CD8-positive, alpha-beta T cell (primary cell): ENCODE measurements at regions of chr1 and their contacts with region 1.

Region 1: DNA sequence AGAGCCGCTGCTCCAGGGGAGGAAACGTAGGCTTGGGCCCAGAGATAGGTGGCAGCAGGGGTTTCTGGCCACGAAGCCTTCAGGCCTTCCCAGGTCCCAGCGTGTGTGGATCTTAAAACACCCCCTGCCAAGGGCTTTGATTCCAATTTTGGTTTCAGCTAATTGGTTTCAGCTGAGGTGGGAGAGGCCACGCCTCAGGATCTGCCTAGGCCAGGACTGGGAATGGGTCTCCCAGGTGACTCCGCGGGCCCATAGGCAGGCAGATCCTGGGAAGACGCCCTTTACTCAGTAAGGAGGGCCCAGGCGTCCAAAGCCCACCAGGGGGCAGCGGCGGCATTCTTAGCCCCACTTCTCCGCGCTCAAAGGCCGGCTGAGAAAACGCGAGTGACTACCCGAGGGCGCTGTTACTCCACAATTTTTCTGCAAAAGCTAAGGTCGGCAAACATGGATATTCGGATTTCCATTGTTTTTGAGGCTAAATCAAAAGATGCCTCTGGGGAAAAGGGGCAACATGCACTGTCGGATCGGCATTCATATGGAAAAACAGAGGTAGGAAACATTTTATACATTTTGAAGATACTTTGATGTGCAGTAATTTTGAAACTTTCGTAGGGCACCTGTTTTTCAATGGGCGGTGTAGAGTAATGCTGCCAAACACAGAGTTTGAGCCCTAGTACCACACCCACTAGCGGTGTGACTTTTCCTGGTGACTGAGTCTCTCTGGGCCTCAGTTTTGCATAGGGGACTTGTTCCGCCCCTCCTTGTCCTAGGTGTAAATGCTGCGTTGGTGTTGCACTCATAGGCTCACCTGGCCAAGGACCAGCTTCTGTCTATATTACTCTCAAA is 31.8 kb upstream of the BCL10 start:
- DNase-seq: peak; percentile 19 to 74 (median 65)
- ATAC-seq: peak; percentile 90
- H3K4me3 ChIP-seq: no peak overlapping the region
- H3K4me3 Mint-ChIP-seq: peak overlapping the region; percentile 65
- H3K27ac ChIP-seq: no peak overlapping the region
- H3K27ac Mint-ChIP-seq: no peak overlapping the region
- H3K4me1 ChIP-seq: peaks cover 4% of the 10 kb centered on the region
- H3K4me1 Mint-ChIP-seq: peaks cover 5% of the 10 kb centered on the region
- H3K27me3 ChIP-seq: no peaks in the 10 kb centered on the region
- H3K27me3 Mint-ChIP-seq: peaks cover 35% of the 10 kb centered on the region
- CTCF ChIP-seq: peak; percentile 68

Region 2: DNA sequence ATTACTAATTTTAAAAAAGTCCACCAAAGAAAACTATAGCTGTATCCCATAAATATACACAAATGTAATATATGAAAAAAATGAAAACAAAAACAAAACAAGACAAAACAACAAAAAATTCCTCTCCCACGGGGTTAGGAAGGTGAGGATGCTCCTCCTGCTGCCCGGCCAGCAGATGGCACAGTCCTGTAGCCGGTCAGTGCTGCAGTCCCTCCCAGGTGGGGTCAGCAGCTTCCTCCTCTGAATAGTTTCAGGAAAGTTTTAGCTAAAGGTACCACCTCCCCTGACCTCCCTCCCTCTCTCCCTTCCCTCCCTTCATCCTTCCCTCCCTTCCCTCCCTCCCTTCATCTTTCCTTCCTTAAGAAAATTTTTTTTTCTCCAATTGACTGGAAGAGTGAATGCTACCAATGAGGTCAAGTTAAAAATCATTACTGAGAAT is 36.1 kb after region 1 on chr1:
- CTCF ChIA-PET with region 1: no interaction called
- POLR2A ChIA-PET with region 1: no interaction called
- intact Hi-C with region 1: no loop called
- DNase-seq: no peak
- ATAC-seq: no peak
- H3K4me3 ChIP-seq: no peak overlapping the region
- H3K4me3 Mint-ChIP-seq: no peak overlapping the region
- H3K27ac ChIP-seq: no peak overlapping the region
- H3K27ac Mint-ChIP-seq: no peak overlapping the region
- H3K4me1 ChIP-seq: no peaks in the 10 kb centered on the region
- H3K4me1 Mint-ChIP-seq: no peaks in the 10 kb centered on the region
- H3K27me3 ChIP-seq: no peaks in the 10 kb centered on the region
- H3K27me3 Mint-ChIP-seq: peaks cover 10% of the 10 kb centered on the region
- CTCF ChIP-seq: no peak

Region 3: DNA sequence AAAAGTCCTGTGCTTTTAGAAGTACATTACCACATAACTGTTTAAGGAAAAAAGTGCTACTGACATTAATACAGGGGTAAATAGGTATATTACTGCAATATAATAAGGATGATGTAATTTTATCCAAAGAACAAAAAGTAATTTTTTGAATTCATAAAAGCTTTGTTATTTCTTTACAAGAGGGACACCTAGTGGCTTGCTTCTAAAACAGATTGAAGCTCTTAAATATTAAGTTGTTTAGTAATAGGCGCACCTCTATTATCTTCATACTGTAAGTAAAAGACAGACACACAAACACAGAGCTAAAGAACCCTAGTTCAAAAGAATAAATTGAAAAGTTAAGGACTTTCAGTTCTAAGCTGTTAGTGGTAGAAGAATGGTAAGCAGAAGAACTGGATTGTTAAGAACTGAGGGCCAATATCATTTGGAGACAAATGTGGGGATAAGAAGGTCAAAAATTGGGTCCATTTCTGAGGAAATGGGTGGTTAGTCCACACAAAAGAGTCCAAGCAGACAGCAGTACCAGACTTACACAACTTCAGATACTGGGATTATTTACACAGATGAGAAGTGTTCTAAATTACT is 384.6 kb after region 1 on chr1:
- CTCF ChIA-PET with region 1: interaction called, 3 read pairs
- POLR2A ChIA-PET with region 1: no interaction called
- intact Hi-C with region 1: loop called (anchors 5 kb)
- DNase-seq: no peak
- ATAC-seq: no peak
- H3K4me3 ChIP-seq: no peak overlapping the region
- H3K4me3 Mint-ChIP-seq: no peak overlapping the region
- H3K27ac ChIP-seq: no peak overlapping the region
- H3K27ac Mint-ChIP-seq: no peak overlapping the region
- H3K4me1 ChIP-seq: no peaks in the 10 kb centered on the region
- H3K4me1 Mint-ChIP-seq: peaks cover 38% of the 10 kb centered on the region
- H3K27me3 ChIP-seq: no peaks in the 10 kb centered on the region
- H3K27me3 Mint-ChIP-seq: no peaks in the 10 kb centered on the region
- CTCF ChIP-seq: no peak

Region 4: DNA sequence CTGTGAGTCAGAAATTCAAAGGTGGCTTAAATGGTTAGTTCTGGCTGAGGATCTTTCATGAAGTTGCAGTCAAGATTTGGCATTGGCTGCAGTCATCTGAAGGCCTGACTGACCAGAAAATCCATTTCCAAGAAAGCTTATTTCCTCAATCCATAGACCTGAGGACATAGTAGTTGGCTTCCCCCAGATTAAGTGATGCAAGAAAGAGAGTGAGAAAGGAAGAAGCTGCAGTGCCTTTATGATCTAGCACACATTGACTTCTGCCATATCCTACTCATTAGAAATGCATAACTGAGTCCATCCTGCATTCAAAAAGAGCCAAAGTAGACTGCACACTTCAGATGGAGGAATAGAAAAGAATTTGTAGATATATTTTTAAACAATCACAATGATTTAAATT is 625.8 kb after region 1 on chr1:
- CTCF ChIA-PET with region 1: no interaction called
- POLR2A ChIA-PET with region 1: no interaction called
- intact Hi-C with region 1: no loop called
- DNase-seq: no peak
- ATAC-seq: no peak
- H3K4me3 ChIP-seq: no peak overlapping the region
- H3K4me3 Mint-ChIP-seq: no peak overlapping the region
- H3K27ac ChIP-seq: no peak overlapping the region
- H3K27ac Mint-ChIP-seq: no peak overlapping the region
- H3K4me1 ChIP-seq: no peaks in the 10 kb centered on the region
- H3K4me1 Mint-ChIP-seq: no peaks in the 10 kb centered on the region
- H3K27me3 ChIP-seq: no peaks in the 10 kb centered on the region
- H3K27me3 Mint-ChIP-seq: no peaks in the 10 kb centered on the region
- CTCF ChIP-seq: no peak

Region 5: GRCh38 chr1:86018283-86018923 is 710.2 kb after region 1 on chr1:
- CTCF ChIA-PET with region 1: no interaction called
- POLR2A ChIA-PET with region 1: no interaction called
- intact Hi-C with region 1: loop called in 1 of 2 experiments (anchors 2 kb)
- DNase-seq: peak in 2 of 9 experiments; percentile 7 to 26
- ATAC-seq: no peak
- H3K4me3 ChIP-seq: no peak overlapping the region
- H3K4me3 Mint-ChIP-seq: no peak overlapping the region
- H3K27ac ChIP-seq: no peak overlapping the region
- H3K27ac Mint-ChIP-seq: no peak overlapping the region
- H3K4me1 ChIP-seq: no peaks in the 10 kb centered on the region
- H3K4me1 Mint-ChIP-seq: no peaks in the 10 kb centered on the region
- H3K27me3 ChIP-seq: no peaks in the 10 kb centered on the region
- H3K27me3 Mint-ChIP-seq: no peaks in the 10 kb centered on the region
- CTCF ChIP-seq: peak; percentile 59